CD4-positive, alpha-beta memory T cell (primary cell): ENCODE measurements at regions of chr9 and their contacts with region 1.

Region 1: GRCh38 chr9:134443168-134444037 is 117.1 kb downstream of the RXRA start:
- DNase-seq: peak; percentile 84 to 94 (median 86)
- H3K4me3 ChIP-seq: no peak overlapping the region
- H3K4me3 Mint-ChIP-seq: peak overlapping the region in 2 of 8 donors; percentile 31 to 43
- H3K27ac ChIP-seq: no peak overlapping the region
- H3K27ac Mint-ChIP-seq: peak overlapping the region; percentile 47 to 81 (median 70)
- H3K4me1 ChIP-seq: peaks cover 17% of the 10 kb centered on the region
- H3K4me1 Mint-ChIP-seq: peaks cover 8 to 22% (median 14%) of the 10 kb centered on the region in 4 donors
- H3K27me3 ChIP-seq: no peaks in the 10 kb centered on the region
- H3K27me3 Mint-ChIP-seq: no peaks in the 10 kb centered on the region

Region 2: GRCh38 chr9:134067904-134068743 is 375.3 kb before region 1 on chr9 and contains the start of gene BRD3:
- CTCF ChIA-PET with region 1: no interaction called
- POLR2A ChIA-PET with region 1: no interaction called
- intact Hi-C with region 1: loop called (anchors 5 kb)
- DNase-seq: peak; percentile 82 to 89 (median 85)
- H3K4me3 ChIP-seq: peak within 1 kb of the TSS; percentile 65 to 74
- H3K4me3 Mint-ChIP-seq: peak within 1 kb of the TSS; percentile 89 to 98 (median 91)
- H3K27ac ChIP-seq: peak within 1 kb of the TSS; percentile 78
- H3K27ac Mint-ChIP-seq: peak within 1 kb of the TSS; percentile 89 to 97 (median 94)
- H3K4me1 ChIP-seq: peaks cover 34% of the 10 kb centered on the region
- H3K4me1 Mint-ChIP-seq: peaks cover 18 to 46% (median 23%) of the 10 kb centered on the region in 4 donors
- H3K27me3 ChIP-seq: peaks cover 4% of the 10 kb centered on the region
- H3K27me3 Mint-ChIP-seq: peaks cover 11 to 14% of the 10 kb centered on the region in 2 donors
- total RNA-seq, gene BRD3: 40.8 to 48.5 TPM

Region 3: DNA sequence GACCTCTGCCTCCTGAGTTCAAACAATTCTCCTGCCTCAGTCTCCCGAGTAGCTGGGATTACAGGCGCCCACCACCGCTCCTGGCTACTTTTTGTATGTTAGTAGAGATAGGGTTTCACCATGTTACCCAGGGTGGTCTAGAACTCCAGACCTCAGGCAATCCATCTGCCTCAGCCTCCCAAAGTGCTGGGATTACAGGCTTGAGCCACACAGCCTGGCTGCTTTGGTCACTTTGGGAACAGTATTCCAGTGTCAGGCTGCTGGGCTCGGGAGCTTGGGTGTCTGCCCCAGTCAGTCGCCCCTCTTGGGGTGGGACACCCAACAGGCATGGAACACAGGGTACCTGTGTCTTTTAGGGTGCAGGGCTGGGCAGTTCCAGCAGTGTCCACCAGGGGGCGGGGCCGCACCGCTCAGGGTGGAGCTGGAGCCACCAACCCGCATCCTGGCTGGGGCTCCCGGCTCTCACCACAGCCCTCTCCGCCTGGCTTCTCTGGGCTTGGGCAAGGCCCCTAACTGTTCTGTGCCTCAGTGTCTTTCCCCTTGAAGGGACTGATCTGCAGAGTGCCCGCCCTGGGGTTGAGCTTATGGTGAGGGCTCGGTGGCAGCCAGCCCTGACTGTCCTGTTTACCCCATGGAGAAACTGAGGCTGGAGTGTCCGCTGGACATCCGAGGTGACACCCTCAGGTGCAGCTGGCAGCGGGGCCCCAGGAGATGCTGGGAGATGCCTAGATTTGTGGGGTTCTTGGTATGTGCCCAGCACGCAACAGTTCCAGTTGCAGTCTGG is 272.7 kb before region 1 on chr9:
- CTCF ChIA-PET with region 1: interaction called, 60 read pairs
- POLR2A ChIA-PET with region 1: interaction called, 8 read pairs
- intact Hi-C with region 1: loop called (anchors 1 kb)
- DNase-seq: peak in 4 of 5 donors; percentile 26 to 48 (median 28)
- H3K4me3 ChIP-seq: no peak overlapping the region
- H3K4me3 Mint-ChIP-seq: no peak overlapping the region
- H3K27ac ChIP-seq: no peak overlapping the region
- H3K27ac Mint-ChIP-seq: no peak overlapping the region
- H3K4me1 ChIP-seq: no peaks in the 10 kb centered on the region
- H3K4me1 Mint-ChIP-seq: peaks cover 0 to 9% (median 2%) of the 10 kb centered on the region in 4 donors
- H3K27me3 ChIP-seq: no peaks in the 10 kb centered on the region
- H3K27me3 Mint-ChIP-seq: no peaks in the 10 kb centered on the region

Region 4: GRCh38 chr9:134365791-134366688 is 77.4 kb before region 1 on chr9:
- CTCF ChIA-PET with region 1: interaction called, 15 read pairs
- POLR2A ChIA-PET with region 1: no interaction called
- intact Hi-C with region 1: loop called (anchors 1 kb)
- DNase-seq: no peak
- H3K4me3 ChIP-seq: no peak overlapping the region
- H3K4me3 Mint-ChIP-seq: no peak overlapping the region
- H3K27ac ChIP-seq: no peak overlapping the region
- H3K27ac Mint-ChIP-seq: peak overlapping the region in 2 of 7 donors; percentile 42 to 48
- H3K4me1 ChIP-seq: no peaks in the 10 kb centered on the region
- H3K4me1 Mint-ChIP-seq: peaks cover 4 to 10% (median 8%) of the 10 kb centered on the region in 4 donors
- H3K27me3 ChIP-seq: no peaks in the 10 kb centered on the region
- H3K27me3 Mint-ChIP-seq: no peaks in the 10 kb centered on the region

Region 5: DNA sequence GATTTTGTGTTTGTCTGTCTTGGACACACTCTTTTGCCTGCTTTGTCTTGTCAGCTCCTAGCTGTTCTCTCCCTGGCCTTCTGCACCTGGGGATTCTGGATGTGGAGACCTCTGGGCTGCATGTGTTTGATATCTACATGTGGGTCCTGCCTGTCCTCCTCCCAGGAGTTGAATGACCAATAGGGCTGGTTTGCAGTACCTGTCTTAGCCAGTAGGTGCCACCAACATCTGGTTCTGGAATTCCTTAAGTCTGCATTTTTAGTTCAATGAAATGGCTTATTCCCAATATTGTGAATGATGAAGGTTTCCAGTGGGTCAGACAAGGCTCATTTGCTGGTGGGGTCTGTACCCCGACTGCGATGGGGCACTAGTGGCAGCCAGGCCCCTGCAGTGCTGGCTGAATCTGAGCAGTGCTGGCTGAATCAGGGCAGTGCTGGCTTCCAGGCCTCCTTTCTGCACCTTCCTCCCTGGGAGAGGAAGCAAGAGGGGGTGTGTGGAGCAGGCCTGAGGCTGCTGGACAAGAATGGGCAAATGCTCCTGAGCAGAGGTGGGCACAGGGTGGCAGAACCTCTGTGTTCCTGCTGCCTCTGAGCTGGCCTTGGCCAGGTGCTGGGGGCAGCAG is 43.9 kb before region 1 on chr9:
- CTCF ChIA-PET with region 1: interaction called, 10 read pairs
- POLR2A ChIA-PET with region 1: interaction called, 4 read pairs
- intact Hi-C with region 1: no loop called
- DNase-seq: no peak
- H3K4me3 ChIP-seq: no peak overlapping the region
- H3K4me3 Mint-ChIP-seq: peak overlapping the region in 1 of 8 donors; percentile 10
- H3K27ac ChIP-seq: no peak overlapping the region
- H3K27ac Mint-ChIP-seq: peak overlapping the region in 4 of 7 donors; percentile 9 to 87 (median 54)
- H3K4me1 ChIP-seq: peaks cover 57% of the 10 kb centered on the region
- H3K4me1 Mint-ChIP-seq: peaks cover 25 to 62% (median 38%) of the 10 kb centered on the region in 4 donors
- H3K27me3 ChIP-seq: no peaks in the 10 kb centered on the region
- H3K27me3 Mint-ChIP-seq: no peaks in the 10 kb centered on the region

Region 6: GRCh38 chr9:134455934-134456739 is 12.7 kb after region 1 on chr9:
- CTCF ChIA-PET with region 1: interaction called, 12 read pairs
- POLR2A ChIA-PET with region 1: interaction called, 5 read pairs
- intact Hi-C with region 1: no loop called
- DNase-seq: peak; percentile 76 to 83 (median 81)
- H3K4me3 ChIP-seq: peak overlapping the region; percentile 62 to 76
- H3K4me3 Mint-ChIP-seq: peak overlapping the region; percentile 73 to 94 (median 84)
- H3K27ac ChIP-seq: peak overlapping the region; percentile 64
- H3K27ac Mint-ChIP-seq: peak overlapping the region; percentile 86 to 96 (median 93)
- H3K4me1 ChIP-seq: peaks cover 22% of the 10 kb centered on the region
- H3K4me1 Mint-ChIP-seq: peaks cover 4 to 18% (median 9%) of the 10 kb centered on the region in 4 donors
- H3K27me3 ChIP-seq: no peaks in the 10 kb centered on the region
- H3K27me3 Mint-ChIP-seq: no peaks in the 10 kb centered on the region